PC-3 (cell line): ENCODE measurements at regions of chr1 and their contacts with region 1.

Region 1: GRCh38 chr1:6613361-6614018 is at the start of gene PHF13:
- DNase-seq: peak; percentile 100
- ATAC-seq: peak; percentile 91
- H3K4me3 ChIP-seq: peak within 1 kb of the TSS; percentile 82
- H3K27ac ChIP-seq: peak within 1 kb of the TSS; percentile 81
- H3K4me1 ChIP-seq: peaks cover 16% of the 10 kb centered on the region
- H3K27me3 ChIP-seq: no peaks in the 10 kb centered on the region
- CTCF ChIP-seq: no peak
- total RNA-seq, gene PHF13: 13.2 and 14.9 TPM in 2 replicates

Region 2: DNA sequence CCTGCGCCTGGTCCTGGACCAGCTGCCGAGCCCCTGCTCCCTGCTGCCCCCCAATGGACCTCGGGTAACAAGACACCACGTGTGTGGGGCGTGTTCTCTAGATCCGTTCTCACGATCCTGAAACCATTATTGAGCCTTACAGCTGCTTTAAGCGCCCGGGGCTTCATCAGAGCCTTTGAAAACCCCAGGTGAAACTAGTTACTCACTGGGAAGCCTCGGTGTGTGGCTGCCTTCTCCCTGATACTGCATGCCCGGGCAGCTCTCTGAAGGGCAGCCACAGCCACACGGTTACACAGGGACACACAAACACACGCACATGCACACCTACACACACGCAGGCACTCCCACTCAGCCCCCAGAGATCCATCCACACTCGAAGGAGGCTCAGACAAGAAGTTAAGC is 199.0 kb before region 1 on chr1:
- CTCF ChIA-PET with region 1: no interaction called
- POLR2A ChIA-PET with region 1: no interaction called
- intact Hi-C with region 1: no loop called
- DNase-seq: peak; percentile 50
- ATAC-seq: peak; percentile 16
- H3K4me3 ChIP-seq: no peak overlapping the region
- H3K27ac ChIP-seq: peak overlapping the region; percentile 67
- H3K4me1 ChIP-seq: peaks cover 46% of the 10 kb centered on the region
- H3K27me3 ChIP-seq: no peaks in the 10 kb centered on the region
- CTCF ChIP-seq: peak; percentile 73

Region 3: DNA sequence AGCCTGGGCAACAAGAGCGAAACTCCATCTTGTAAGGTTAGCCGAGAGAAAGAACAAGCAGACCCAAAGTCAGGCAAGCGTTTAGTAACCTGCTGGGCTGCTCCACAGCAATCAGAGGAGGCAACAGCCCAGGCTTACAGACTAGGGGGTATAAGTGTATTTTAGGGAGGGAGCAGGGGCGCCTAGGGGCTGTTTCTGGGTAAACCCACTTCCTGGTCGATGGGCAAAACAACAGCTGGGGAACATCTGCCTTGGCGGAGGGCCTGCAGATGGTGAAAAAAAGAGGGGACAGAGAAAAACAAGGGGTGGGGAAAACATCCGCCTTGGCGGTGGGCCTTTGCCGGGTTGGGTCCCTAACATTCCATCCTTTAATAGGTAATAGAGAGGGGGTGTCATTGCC is 53.2 kb before region 1 on chr1:
- CTCF ChIA-PET with region 1: no interaction called
- POLR2A ChIA-PET with region 1: no interaction called
- intact Hi-C with region 1: no loop called
- DNase-seq: no peak
- ATAC-seq: no peak
- H3K4me3 ChIP-seq: no peak overlapping the region
- H3K27ac ChIP-seq: no peak overlapping the region
- H3K4me1 ChIP-seq: no peaks in the 10 kb centered on the region
- H3K27me3 ChIP-seq: peaks cover 30% of the 10 kb centered on the region
- CTCF ChIP-seq: no peak

Region 4: GRCh38 chr1:6624710-6625583 is 11.5 kb after region 1 on chr1 and contains the start of gene THAP3:
- CTCF ChIA-PET with region 1: no interaction called
- POLR2A ChIA-PET with region 1: interaction called, 6 read pairs
- intact Hi-C with region 1: loop called (anchors 1 kb)
- DNase-seq: peak; percentile 86
- ATAC-seq: peak; percentile 84
- H3K4me3 ChIP-seq: peak within 1 kb of the TSS; percentile 89
- H3K27ac ChIP-seq: peak within 1 kb of the TSS; percentile 8
- H3K4me1 ChIP-seq: peaks cover 13% of the 10 kb centered on the region
- H3K27me3 ChIP-seq: no peaks in the 10 kb centered on the region
- CTCF ChIP-seq: no peak
- total RNA-seq, gene THAP3: 42.4 and 54.6 TPM in 2 replicates